ENCODE measurements at regions of chr14 and their contacts with region 1.

Region 1: DNA sequence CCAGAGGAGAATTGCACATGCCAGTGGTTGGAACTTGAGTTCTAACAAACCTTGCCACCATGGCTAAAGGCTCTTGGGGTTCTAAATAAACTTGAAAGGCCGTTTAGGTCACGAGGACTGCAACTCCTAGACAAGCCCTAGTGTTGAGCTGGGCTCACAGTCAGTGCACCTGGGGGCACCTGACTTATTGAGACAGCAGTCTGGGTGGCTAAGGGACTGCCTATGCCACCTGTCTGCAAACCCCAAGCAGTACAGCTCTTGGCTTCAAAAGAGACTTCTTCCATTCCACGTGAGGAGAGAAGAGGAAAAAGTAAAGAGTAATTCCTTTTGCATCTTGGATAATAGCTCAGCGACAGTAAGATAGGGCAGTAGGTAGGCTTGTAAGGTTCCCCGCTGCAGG is 765.6 kb upstream of the FOXG1 start:
- DNase-seq: no peak

Region 2: DNA sequence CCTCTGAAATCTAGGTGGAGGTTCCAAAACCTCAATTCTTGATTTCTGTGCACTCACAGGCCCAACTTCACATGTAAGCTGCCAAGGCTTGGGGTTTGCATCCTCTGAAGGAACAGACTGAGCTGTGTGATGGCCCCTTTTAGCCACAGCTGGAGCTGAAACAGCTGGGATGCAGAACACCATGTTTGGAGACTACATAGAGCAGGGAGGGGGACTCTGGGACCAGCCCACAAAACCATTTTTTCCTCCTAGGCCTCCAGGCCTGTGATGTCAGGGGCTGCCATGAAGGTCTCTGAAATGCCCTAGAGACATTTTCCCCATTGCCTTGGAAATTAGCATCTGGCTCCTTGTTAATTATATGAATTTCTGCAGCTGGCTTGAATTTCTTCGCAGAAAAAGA is 377.2 kb before region 1 on chr14:
- intact Hi-C with region 1: no loop called
- DNase-seq: no peak

Region 3: GRCh38 chr14:27984103-27984502 is 16.9 kb before region 1 on chr14:
- intact Hi-C with region 1: loop called in 1 of 2 experiments (anchors 2 kb)
- DNase-seq: no peak

Measured in posterior vena cava (tissue), 2 donors.